Endothelial cell of umbilical vein (primary cell): ENCODE measurements at regions of chr11 and their contacts with region 1.

Region 1: GRCh38 chr11:110777775-110778174 is 65.5 kb upstream of the ARHGAP20 start:
- DNase-seq: peak; percentile 95
- H3K4me3 ChIP-seq: peak overlapping the region in 1 of 3 experiments; percentile 0
- H3K27ac ChIP-seq: peak overlapping the region; percentile 50
- H3K4me1 ChIP-seq: peaks cover 21% of the 10 kb centered on the region
- H3K27me3 ChIP-seq: no peaks in the 10 kb centered on the region
- CTCF ChIP-seq: no peak
- POLR2A ChIP-seq: no peak

Region 2: GRCh38 chr11:110148775-110149744 is 628.7 kb before region 1 on chr11:
- CTCF ChIA-PET with region 1: no interaction called
- POLR2A ChIA-PET with region 1: no interaction called
- dilution Hi-C with region 1: no loop called
- intact Hi-C with region 1: no loop called
- DNase-seq: peak; percentile 79
- H3K4me3 ChIP-seq: no peak overlapping the region
- H3K27ac ChIP-seq: peak overlapping the region; percentile 74
- H3K4me1 ChIP-seq: peaks cover 33% of the 10 kb centered on the region
- H3K27me3 ChIP-seq: no peaks in the 10 kb centered on the region
- CTCF ChIP-seq: no peak
- POLR2A ChIP-seq: no peak

Region 3: DNA sequence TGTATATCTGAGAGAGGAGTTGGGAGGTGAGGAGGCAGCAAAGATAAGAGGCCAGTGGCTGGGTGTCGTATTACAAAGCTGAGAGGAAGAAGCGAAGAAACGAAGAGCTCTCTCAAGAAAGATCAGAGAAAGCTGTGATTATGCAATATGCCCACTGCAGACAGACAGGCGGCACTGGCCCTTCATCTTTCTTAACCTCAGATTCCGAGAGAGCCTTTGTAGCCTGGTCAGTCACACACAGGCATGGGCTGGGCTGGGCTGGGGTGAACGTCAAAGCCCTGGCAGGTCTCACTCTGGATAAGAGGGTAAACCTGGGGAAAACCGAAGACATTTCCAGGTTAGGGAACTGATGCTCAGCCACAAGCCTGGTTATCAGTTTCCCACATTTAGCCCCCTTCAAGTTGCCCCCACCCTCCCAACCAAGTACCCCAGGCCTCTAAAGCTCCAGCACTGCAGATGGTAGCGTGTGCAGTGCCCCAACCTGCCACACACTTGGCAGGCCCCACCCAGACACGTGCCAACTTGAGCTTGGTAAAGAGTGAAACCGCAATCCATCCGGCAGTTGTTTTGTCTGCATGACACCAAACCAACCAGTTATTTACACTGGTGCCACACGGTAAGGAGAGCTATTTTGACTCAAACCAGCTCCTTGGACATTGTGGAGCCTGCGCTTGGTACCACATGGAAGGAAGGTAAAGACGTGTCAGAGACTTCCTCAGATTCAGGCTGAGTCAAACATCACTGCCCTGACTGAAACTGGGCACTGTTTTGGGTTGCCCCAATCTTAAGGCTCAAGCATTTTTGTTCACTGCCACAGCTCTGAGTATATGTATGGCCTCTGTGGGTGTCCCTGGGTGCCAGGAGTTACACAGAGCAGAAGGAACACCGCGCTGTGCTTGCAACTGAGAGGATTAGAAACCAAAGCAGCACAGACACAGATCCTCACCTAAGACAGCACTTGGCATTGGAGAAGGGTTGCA is 212.1 kb before region 1 on chr11:
- CTCF ChIA-PET with region 1: no interaction called
- POLR2A ChIA-PET with region 1: no interaction called
- dilution Hi-C with region 1: no loop called
- intact Hi-C with region 1: no loop called
- DNase-seq: no peak
- H3K4me3 ChIP-seq: no peak overlapping the region
- H3K27ac ChIP-seq: no peak overlapping the region
- H3K4me1 ChIP-seq: no peaks in the 10 kb centered on the region
- H3K27me3 ChIP-seq: no peaks in the 10 kb centered on the region
- CTCF ChIP-seq: no peak
- POLR2A ChIP-seq: no peak

Region 4: DNA sequence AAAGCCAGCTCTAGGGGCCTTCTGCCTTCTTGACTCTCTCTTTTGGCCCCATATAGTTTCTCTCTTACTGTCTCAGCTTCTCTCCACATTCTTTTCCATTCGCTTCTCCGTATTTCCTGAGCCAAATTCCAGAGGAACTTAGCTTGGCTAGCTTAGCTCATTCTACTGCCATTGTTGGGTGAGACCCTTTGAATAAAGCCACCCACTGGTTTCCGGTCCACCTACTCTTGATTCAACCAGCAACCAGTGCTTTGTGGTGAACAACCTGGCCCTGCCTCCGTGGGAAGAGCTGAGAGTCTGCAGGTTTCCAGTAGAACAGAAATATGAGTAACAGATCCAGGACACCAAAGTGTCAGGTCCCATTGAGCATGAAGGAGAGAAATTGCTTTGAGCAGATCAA is 15.8 kb after region 1 on chr11:
- CTCF ChIA-PET with region 1: interaction called, 11 read pairs
- POLR2A ChIA-PET with region 1: no interaction called
- dilution Hi-C with region 1: no loop called
- intact Hi-C with region 1: loop called (anchors 2 kb)
- DNase-seq: peak; percentile 51
- H3K4me3 ChIP-seq: no peak overlapping the region
- H3K27ac ChIP-seq: no peak overlapping the region
- H3K4me1 ChIP-seq: peaks cover 20% of the 10 kb centered on the region
- H3K27me3 ChIP-seq: no peaks in the 10 kb centered on the region
- CTCF ChIP-seq: no peak
- POLR2A ChIP-seq: no peak